ENCODE measurements at regions of chr3 and their contacts with region 1.

Region 1: GRCh38 chr3:43345877-43346276 is 59.5 kb downstream of the SNRK start:
- DNase-seq: peak in 2 of 9 experiments; percentile 32 to 48
- ATAC-seq: peak; percentile 16
- H3K4me3 ChIP-seq: no peak overlapping the region
- H3K4me3 Mint-ChIP-seq: peak overlapping the region; percentile 36
- H3K27ac ChIP-seq: peak overlapping the region; percentile 81 to 91
- H3K27ac Mint-ChIP-seq: peak overlapping the region; percentile 97
- H3K4me1 ChIP-seq: peaks cover 82% of the 10 kb centered on the region
- H3K4me1 Mint-ChIP-seq: peaks cover 84% of the 10 kb centered on the region
- H3K27me3 ChIP-seq: no peaks in the 10 kb centered on the region
- H3K27me3 Mint-ChIP-seq: no peaks in the 10 kb centered on the region
- CTCF ChIP-seq: no peak

Region 2: DNA sequence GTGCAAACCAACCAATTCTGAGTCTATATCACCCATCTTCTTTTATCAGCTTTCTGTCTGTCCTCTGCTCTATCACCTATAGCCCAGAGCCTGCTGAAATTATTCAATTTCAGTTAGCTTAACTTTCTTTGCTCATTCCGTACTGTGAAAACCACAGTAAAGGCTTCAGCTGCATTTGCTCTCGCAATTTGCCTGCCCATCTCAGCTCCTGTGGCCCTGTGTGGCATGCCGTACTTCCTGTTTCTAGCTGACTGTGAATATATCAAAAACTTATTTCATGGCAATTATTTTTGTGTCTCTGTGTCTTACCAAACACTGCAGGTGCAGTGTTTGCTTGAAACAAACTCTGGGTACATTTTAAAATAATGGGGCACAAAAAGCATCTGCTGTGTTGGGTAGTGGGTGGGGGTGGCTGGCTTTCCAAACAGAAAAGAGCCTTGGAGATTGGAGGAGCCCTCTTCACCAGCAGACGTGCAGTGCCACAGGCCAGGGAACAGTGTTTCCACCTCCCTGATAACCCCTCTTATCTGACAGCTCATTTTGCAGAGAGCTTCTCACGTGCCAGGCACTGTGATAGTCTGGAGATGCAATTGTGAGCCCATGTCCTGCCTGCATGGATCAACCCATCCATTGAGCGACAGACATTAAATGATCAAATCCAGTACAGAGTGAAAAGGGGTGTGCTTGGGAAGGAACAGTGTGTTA is 321.5 kb before region 1 on chr3:
- CTCF ChIA-PET with region 1: no interaction called
- POLR2A ChIA-PET with region 1: no interaction called
- intact Hi-C with region 1: loop called in 1 of 2 experiments (anchors 5 kb)
- DNase-seq: peak in 7 of 9 experiments; percentile 39 to 82 (median 72)
- ATAC-seq: peak; percentile 91
- H3K4me3 ChIP-seq: peak overlapping the region; percentile 0 to 20
- H3K4me3 Mint-ChIP-seq: peak overlapping the region; percentile 74
- H3K27ac ChIP-seq: peak overlapping the region; percentile 25 to 56
- H3K27ac Mint-ChIP-seq: peak overlapping the region; percentile 95
- H3K4me1 ChIP-seq: peaks cover 69% of the 10 kb centered on the region
- H3K4me1 Mint-ChIP-seq: peaks cover 79% of the 10 kb centered on the region
- H3K27me3 ChIP-seq: no peaks in the 10 kb centered on the region
- H3K27me3 Mint-ChIP-seq: no peaks in the 10 kb centered on the region
- CTCF ChIP-seq: no peak

Region 3: GRCh38 chr3:43286115-43286840 is 59.6 kb before region 1 on chr3 and contains the start of gene SNRK:
- CTCF ChIA-PET with region 1: interaction called, 19 read pairs
- POLR2A ChIA-PET with region 1: interaction called, 22 read pairs
- intact Hi-C with region 1: loop called (anchors 2 kb)
- DNase-seq: peak; percentile 86 to 99 (median 93)
- ATAC-seq: peak; percentile 84
- H3K4me3 ChIP-seq: peak within 1 kb of the TSS; percentile 76 to 82
- H3K4me3 Mint-ChIP-seq: peak within 1 kb of the TSS; percentile 99
- H3K27ac ChIP-seq: peak within 1 kb of the TSS; percentile 87 to 91
- H3K27ac Mint-ChIP-seq: peak within 1 kb of the TSS; percentile 100
- H3K4me1 ChIP-seq: peaks cover 27% of the 10 kb centered on the region
- H3K4me1 Mint-ChIP-seq: peaks cover 31% of the 10 kb centered on the region
- H3K27me3 ChIP-seq: no peaks in the 10 kb centered on the region
- H3K27me3 Mint-ChIP-seq: no peaks in the 10 kb centered on the region
- CTCF ChIP-seq: peak; percentile 48
- total RNA-seq, gene SNRK: 280 to 281 TPM

Region 4: GRCh38 chr3:43326891-43327581 is 18.8 kb before region 1 on chr3:
- CTCF ChIA-PET with region 1: no interaction called
- POLR2A ChIA-PET with region 1: interaction called, 3 read pairs
- intact Hi-C with region 1: loop called (anchors 2 kb)
- DNase-seq: peak in 1 of 9 experiments; percentile 51
- ATAC-seq: peak; percentile 73
- H3K4me3 ChIP-seq: no peak overlapping the region
- H3K4me3 Mint-ChIP-seq: peak overlapping the region; percentile 54
- H3K27ac ChIP-seq: peak overlapping the region; percentile 1 to 31
- H3K27ac Mint-ChIP-seq: peak overlapping the region; percentile 88
- H3K4me1 ChIP-seq: peaks cover 75% of the 10 kb centered on the region
- H3K4me1 Mint-ChIP-seq: peaks cover 88% of the 10 kb centered on the region
- H3K27me3 ChIP-seq: no peaks in the 10 kb centered on the region
- H3K27me3 Mint-ChIP-seq: no peaks in the 10 kb centered on the region
- CTCF ChIP-seq: no peak

Region 5: GRCh38 chr3:43363621-43364266 is 17.9 kb after region 1 on chr3:
- CTCF ChIA-PET with region 1: interaction called, 10 read pairs
- POLR2A ChIA-PET with region 1: no interaction called
- intact Hi-C with region 1: no loop called
- DNase-seq: no peak
- ATAC-seq: no peak
- H3K4me3 ChIP-seq: no peak overlapping the region
- H3K4me3 Mint-ChIP-seq: no peak overlapping the region
- H3K27ac ChIP-seq: no peak overlapping the region
- H3K27ac Mint-ChIP-seq: peak overlapping the region; percentile 71
- H3K4me1 ChIP-seq: no peaks in the 10 kb centered on the region
- H3K4me1 Mint-ChIP-seq: peaks cover 8% of the 10 kb centered on the region
- H3K27me3 ChIP-seq: no peaks in the 10 kb centered on the region
- H3K27me3 Mint-ChIP-seq: no peaks in the 10 kb centered on the region
- CTCF ChIP-seq: no peak

Region 6: DNA sequence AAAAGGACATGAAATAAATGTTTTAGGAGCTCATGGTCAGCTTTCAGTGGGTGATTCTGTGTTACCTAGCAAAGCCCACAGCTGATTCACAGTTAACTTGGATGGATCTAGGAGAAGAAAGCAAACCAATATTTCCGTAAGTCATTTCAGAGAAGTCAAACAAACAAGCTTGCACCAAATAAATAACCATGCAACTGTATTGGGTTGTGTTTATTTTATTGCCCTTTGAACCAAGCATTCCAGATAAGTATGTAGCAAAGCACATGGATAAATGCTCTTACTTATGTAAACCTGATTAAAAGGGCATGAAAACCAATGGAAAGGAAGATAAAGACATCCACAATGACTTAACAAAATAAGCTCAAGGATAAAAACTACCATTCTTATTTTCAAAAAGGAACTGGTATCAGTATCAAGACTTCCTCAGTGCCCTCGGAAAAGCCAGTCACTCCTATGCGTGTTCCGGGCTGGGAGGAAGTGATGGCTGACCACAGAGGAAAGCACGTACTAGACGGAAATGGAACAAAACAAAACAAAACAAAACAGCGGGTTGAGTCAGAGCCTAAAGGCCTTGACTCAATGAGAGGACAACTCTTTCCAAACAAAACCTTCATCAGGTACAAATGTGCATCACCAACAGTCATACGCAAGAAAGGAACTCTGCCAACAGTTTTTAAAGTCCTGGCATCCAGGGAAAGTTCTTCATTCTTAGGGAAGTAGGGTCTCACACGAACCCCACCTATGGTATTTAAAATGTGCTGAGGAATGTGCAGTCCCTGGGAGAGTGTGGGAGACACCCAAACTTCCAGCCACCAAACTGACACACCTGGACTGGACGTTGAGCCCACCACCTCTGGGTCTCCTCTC is 43.7 kb after region 1 on chr3:
- CTCF ChIA-PET with region 1: no interaction called
- POLR2A ChIA-PET with region 1: interaction called, 7 read pairs
- intact Hi-C with region 1: loop called (anchors 1 to 5 kb)
- DNase-seq: peak; percentile 40 to 93 (median 74)
- ATAC-seq: peak; percentile 89
- H3K4me3 ChIP-seq: peak overlapping the region in 1 of 2 experiments; percentile 21
- H3K4me3 Mint-ChIP-seq: peak overlapping the region; percentile 50
- H3K27ac ChIP-seq: peak overlapping the region; percentile 45 to 85
- H3K27ac Mint-ChIP-seq: peak overlapping the region; percentile 92
- H3K4me1 ChIP-seq: peaks cover 32% of the 10 kb centered on the region
- H3K4me1 Mint-ChIP-seq: peaks cover 80% of the 10 kb centered on the region
- H3K27me3 ChIP-seq: no peaks in the 10 kb centered on the region
- H3K27me3 Mint-ChIP-seq: no peaks in the 10 kb centered on the region
- CTCF ChIP-seq: no peak

Measured in CD8-positive, alpha-beta T cell (primary cell).